ENCODE measurements at regions of chr12 and their contacts with region 1.

Region 1: GRCh38 chr12:80877721-80878265 is 59.9 kb downstream of the LIN7A start:
- DNase-seq: no peak
- ATAC-seq: peak; percentile 79 to 80

Region 2: GRCh38 chr12:80745851-80746505 is 131.8 kb before region 1 on chr12:
- intact Hi-C with region 1: no loop called
- DNase-seq: no peak
- ATAC-seq: no peak

Region 3: DNA sequence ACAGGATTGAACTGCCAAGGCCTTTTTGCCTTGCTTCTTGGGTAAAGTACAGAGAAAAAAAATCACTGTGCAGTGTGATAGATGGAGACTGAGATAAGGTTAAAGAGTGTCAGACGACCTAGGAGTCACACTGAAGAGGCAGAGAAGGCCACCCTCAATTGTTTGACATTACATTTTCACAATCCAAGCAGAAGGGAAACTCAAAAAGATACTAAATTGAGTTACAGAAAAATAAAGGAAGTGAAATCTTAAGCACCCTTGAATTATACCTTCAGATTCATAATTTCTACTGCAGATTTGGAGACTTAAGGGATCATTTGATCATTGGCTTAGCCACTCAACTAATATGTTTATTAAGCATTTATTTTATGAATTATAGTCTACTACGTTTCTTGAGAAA is 64.0 kb before region 1 on chr12:
- intact Hi-C with region 1: no loop called
- DNase-seq: no peak
- ATAC-seq: no peak

Region 4: GRCh38 chr12:80936498-80937390 is 59.0 kb after region 1 on chr12:
- intact Hi-C with region 1: loop called in 1 of 2 experiments (anchors 5 kb)
- DNase-seq: peak; percentile 40
- ATAC-seq: peak; percentile 75 to 87

Measured in left cardiac atrium (tissue), 4 donors.